ENCODE measurements at regions of chr10 and their contacts with region 1.

Region 1: GRCh38 chr10:22988581-22989360 is 60.9 kb downstream of the ARMC3 start:
- DNase-seq: peak; percentile 57
- H3K4me3 Mint-ChIP-seq: no peak overlapping the region
- H3K27ac Mint-ChIP-seq: no peak overlapping the region
- H3K4me1 Mint-ChIP-seq: peaks cover 22% of the 10 kb centered on the region
- H3K27me3 Mint-ChIP-seq: peaks cover 9% of the 10 kb centered on the region

Region 2: DNA sequence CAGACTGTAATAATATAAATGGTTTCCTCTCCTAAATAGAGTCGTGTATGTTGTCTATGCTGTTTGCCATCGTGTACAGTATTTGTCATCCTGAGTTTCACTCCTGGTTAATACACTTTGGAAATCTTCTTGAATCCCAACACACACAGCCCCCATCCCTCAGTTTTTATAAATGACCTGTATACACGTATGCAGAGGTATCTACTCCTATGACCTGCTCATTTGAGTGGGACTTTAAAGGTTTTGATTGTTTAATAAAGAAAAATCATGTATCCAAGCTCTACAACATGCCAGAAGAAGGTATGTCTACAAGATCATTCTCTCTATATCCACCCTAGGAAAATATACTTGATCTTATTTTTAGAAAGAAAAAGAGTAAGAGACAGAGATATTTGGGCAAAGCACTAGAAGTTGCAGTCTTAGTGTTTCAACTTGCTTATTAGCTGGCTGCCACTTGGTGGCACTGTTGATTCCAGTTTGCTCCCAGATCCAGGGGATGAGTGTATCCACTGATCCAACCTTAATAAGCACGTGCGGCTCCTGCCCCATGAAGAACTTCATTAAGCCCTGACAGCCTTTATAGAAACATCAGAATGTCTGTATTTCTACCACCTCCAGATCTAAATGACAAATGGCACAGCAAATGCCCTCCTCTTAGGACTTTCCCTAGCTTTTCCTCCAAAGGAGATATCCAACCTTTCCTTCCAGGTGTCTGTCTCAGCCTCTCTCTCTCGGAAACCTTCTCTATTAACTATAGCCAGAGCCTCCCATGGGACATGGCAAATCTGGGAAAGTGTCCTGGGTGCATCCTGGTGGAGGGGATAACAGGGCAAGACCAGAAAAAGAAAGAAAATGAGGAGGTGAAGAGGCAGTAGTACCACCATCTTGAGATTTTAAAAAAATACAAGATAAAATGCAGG is 1910.1 kb before region 1 on chr10:
- intact Hi-C with region 1: loop called (anchors 5 kb)
- DNase-seq: no peak
- H3K4me3 Mint-ChIP-seq: no peak overlapping the region
- H3K27ac Mint-ChIP-seq: no peak overlapping the region
- H3K4me1 Mint-ChIP-seq: no peaks in the 10 kb centered on the region
- H3K27me3 Mint-ChIP-seq: no peaks in the 10 kb centered on the region

Region 3: DNA sequence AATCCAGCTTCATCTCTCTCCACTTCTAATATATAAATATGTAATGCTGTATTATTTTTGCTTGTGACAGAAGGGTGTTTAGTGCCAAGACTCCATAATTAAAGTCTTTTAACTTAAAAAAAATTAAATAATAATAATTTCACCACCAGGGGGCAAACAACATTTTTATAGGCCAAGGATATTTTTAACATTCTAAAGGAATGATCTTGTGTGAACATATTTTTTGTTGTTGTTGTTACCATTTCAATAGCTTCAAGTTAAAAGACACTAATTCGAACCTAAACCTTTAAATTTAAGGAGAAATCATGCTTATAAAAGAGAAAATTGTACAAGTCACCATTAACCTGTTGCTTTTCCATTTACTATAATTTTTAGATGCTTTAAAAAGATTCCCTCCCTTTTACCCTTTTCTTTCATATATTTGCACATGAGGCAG is 977.8 kb before region 1 on chr10:
- intact Hi-C with region 1: loop called (anchors 1 kb)
- DNase-seq: no peak
- H3K4me3 Mint-ChIP-seq: no peak overlapping the region
- H3K27ac Mint-ChIP-seq: no peak overlapping the region
- H3K4me1 Mint-ChIP-seq: no peaks in the 10 kb centered on the region
- H3K27me3 Mint-ChIP-seq: peaks cover 22% of the 10 kb centered on the region

Region 4: GRCh38 chr10:22436884-22437619 is 551.7 kb before region 1 on chr10:
- intact Hi-C with region 1: loop called (anchors 5 kb)
- DNase-seq: peak; percentile 80
- H3K4me3 Mint-ChIP-seq: peak overlapping the region; percentile 91
- H3K27ac Mint-ChIP-seq: peak overlapping the region; percentile 96
- H3K4me1 Mint-ChIP-seq: peaks cover 49% of the 10 kb centered on the region
- H3K27me3 Mint-ChIP-seq: peaks cover 9% of the 10 kb centered on the region

Region 5: GRCh38 chr10:22550732-22551131 is 438.0 kb before region 1 on chr10:
- intact Hi-C with region 1: loop called (anchors 1 kb)
- DNase-seq: peak; percentile 13
- H3K4me3 Mint-ChIP-seq: no peak overlapping the region
- H3K27ac Mint-ChIP-seq: peak overlapping the region; percentile 40
- H3K4me1 Mint-ChIP-seq: peaks cover 23% of the 10 kb centered on the region
- H3K27me3 Mint-ChIP-seq: no peaks in the 10 kb centered on the region

Measured in activated T-helper 1 cell treated with anti-CD3 and anti-CD28 coated beads, Interleukin-12 subunit alpha, Interleukin-12 subunit beta, Interleukin-2, Interleukin-4 antibody, amounts not matched to agents 30 ng/mL and 10 ng/mL and 1 ng/mL, durations not matched to agents 14 hours and 24 hours and 36 hours (primary cell).